Left cardiac atrium (tissue), 4 donors: ENCODE measurements at regions of chr11 and their contacts with region 1.

Region 1: DNA sequence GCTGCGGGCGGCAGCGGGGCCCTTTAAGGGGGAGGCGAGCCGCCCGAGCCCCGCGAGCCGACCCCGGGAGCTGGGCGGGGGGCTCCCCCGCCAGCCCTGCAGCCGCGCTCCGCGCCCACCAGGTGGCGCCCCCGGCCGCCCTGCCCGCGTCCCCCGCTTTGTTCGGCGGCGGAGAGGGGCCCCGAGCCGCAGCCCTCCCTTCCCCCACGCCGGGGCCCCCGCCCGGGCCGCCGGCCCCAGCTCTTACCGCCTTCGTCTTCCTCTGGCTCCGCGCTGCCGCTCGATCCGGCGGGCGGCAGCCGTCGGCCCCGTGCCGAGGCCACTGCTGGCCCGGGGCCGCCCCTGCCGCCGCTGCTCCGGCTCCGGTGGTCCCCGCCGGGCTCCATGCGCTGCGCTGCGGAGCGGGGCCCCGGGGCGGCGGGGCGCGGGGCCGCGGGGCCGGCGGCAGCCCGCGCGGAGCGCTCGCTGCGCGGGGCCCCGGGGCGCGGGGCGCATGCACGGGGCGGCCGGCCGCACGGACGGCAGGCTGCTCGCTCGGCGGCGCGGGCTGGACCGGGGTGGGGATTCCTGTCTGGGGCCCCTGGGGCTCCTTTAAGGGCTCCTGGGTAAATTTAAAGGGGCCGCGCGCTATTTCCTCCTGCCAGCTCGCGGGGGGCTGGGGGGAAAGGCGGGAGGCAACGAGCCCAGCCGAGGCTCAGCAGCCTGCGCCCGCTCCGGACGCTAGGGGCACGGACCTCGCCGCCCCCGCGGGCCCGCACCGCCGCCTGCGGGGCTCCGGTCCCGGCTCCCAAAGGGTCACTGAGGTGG is at the start of gene ZFTA:
- DNase-seq: peak; percentile 79
- ATAC-seq: peak; percentile 6 to 49
- total RNA-seq, gene ZFTA: 15.5 to 16.0 TPM

Region 2: GRCh38 chr11:63813035-63813562 is 44.7 kb after region 1 on chr11 and contains the start of gene SPINDOC:
- intact Hi-C with region 1: loop called in 1 of 2 experiments (anchors 2 kb)
- DNase-seq: peak; percentile 86
- ATAC-seq: peak; percentile 94 to 96
- total RNA-seq, gene SPINDOC: 13.3 to 13.5 TPM

Region 3: DNA sequence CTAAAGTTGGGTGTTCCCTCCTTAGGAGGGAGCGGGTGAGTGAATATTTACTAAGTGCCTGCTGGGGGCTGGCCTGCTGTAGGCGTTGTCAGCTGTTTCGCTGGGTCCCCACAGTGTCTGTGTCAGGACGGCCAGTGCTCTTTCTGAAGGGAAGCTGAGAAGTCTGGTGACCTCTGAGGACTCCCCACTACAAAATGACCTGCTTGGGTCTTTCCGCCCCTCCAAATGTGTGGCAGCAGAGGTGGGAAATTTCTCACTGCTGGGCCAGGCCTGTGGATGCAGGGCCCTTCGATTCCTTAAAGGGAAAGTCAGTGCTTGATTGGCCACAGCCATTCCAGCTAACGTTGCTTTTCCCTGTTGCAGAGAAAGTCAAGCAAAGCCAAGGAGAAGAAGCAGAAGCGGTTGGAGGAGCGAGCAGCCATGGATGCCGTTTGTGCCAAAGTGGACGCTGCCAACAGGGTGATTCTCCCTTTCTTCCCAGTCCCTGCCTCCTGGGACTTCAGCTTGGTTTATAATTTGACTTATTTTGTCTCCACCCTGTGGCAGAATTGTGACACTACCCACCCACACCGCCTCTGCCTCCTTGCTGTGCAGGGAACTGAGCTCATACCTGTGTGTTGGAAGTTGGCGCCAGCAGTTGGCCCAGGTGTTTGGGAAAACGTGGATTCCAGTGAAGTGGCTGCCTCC is 177.2 kb after region 1 on chr11:
- intact Hi-C with region 1: loop called (anchors 5 to 10 kb)
- DNase-seq: peak; percentile 71
- ATAC-seq: peak; percentile 81 to 87